Ascending aorta (tissue), 2 donors: ENCODE measurements at regions of chr5 and their contacts with region 1.

Region 1: GRCh38 chr5:147628058-147628895 is 118.4 kb upstream of the DPYSL3 start:
- DNase-seq: peak in 1 of 2 donors; percentile 71
- H3K4me3 ChIP-seq: no peak overlapping the region
- H3K27ac ChIP-seq: no peak overlapping the region
- H3K4me1 ChIP-seq: no peaks in the 10 kb centered on the region
- H3K27me3 ChIP-seq: no peaks in the 10 kb centered on the region
- CTCF ChIP-seq: peak; percentile 53 to 74 (median 56)

Region 2: DNA sequence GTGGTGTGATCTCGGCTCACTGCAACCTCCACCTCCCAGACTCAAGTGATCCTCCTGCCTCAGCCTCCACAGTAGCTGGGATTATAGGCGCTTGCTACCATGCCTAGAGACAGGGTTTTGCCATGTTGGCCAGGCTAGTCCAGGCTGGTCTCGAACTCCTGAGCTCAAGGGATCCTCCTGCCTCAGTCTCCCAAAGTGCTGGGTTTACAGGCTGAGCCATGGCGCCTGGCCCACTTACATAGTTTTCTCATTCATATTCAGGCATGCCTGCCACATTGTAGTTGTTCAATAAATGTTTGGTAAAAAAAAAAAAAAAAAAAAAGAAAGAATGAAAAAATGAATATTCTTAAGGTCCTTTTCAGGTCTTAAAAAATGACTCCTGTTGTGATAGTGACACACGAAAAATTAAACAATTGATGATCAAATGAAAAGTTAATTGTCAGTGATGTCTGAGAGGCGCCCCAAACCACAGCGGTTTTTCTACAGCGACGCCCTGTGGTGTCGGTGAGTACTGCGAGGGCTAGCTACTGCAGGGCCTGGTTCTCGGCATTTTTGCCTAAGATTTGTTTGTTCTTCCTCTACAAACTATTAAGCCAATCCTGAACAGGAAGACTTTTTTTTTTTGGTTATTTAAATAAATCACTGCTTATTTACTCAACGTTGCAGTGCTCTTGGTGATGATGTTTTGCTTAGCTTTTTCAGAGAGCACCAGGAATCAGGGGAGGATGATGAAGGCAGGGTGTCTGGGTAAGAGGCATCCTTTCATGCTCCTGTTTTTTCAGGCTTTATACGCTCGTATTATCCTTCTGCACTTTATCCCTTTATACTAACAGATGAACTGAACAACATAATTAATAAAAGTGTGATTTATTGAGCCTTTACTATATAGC is 51.4 kb before region 1 on chr5:
- intact Hi-C with region 1: no loop called
- DNase-seq: no peak
- H3K4me3 ChIP-seq: no peak overlapping the region
- H3K27ac ChIP-seq: no peak overlapping the region
- H3K4me1 ChIP-seq: peaks cover 0 to 4% of the 10 kb centered on the region in 2 donors
- H3K27me3 ChIP-seq: no peaks in the 10 kb centered on the region
- CTCF ChIP-seq: peak; percentile 78 to 88 (median 80)

Region 3: DNA sequence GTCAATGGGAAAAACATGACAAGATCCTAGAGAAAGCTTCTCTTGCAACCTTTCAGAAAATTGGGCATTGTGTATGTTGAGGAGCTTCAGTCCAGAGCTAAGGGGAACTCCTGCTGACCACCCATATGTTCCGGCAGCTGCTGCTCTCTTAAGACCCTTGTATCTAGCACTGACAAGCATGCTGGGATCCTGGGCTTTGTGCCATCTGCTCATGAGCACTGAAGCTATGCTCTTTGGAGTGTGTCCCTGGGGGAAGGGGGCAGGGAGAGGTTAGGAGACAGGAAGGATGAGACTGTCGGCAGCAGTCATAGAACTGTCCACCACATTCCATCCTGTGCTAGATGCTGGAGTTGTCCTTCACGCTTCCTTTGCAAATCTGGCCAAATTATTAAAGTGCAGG is 45.0 kb after region 1 on chr5:
- intact Hi-C with region 1: no loop called
- DNase-seq: no peak
- H3K4me3 ChIP-seq: no peak overlapping the region
- H3K27ac ChIP-seq: no peak overlapping the region
- H3K4me1 ChIP-seq: no peaks in the 10 kb centered on the region
- H3K27me3 ChIP-seq: no peaks in the 10 kb centered on the region
- CTCF ChIP-seq: no peak

Region 4: DNA sequence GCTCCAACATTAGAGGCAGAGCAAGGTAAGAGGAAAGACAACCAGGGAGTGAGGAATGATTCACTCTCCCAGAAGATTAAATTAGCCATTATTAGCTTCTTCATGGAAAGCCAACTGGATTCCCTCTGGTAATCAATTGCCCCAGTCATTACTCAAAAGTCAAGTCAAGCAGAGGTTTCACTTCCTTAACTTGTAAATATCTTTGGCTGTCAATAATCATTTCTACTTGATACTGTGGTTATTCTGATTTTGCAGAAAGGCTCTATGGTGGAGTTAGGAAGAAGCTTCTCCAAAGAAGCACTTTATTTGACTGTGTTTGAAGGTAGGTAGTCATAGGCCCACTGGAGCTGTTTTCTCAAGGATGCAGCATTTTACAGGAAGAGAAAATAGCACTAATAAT is 76.3 kb after region 1 on chr5:
- intact Hi-C with region 1: no loop called
- DNase-seq: no peak
- H3K4me3 ChIP-seq: no peak overlapping the region
- H3K27ac ChIP-seq: no peak overlapping the region
- H3K4me1 ChIP-seq: no peaks in the 10 kb centered on the region
- H3K27me3 ChIP-seq: no peaks in the 10 kb centered on the region
- CTCF ChIP-seq: no peak

Region 5: GRCh38 chr5:147822686-147823491 is 194.6 kb after region 1 on chr5:
- intact Hi-C with region 1: loop called (anchors 1 kb)
- DNase-seq: no peak
- H3K4me3 ChIP-seq: no peak overlapping the region
- H3K27ac ChIP-seq: no peak overlapping the region
- H3K4me1 ChIP-seq: no peaks in the 10 kb centered on the region
- H3K27me3 ChIP-seq: no peaks in the 10 kb centered on the region
- CTCF ChIP-seq: peak; percentile 53 to 67 (median 66)

Region 6: DNA sequence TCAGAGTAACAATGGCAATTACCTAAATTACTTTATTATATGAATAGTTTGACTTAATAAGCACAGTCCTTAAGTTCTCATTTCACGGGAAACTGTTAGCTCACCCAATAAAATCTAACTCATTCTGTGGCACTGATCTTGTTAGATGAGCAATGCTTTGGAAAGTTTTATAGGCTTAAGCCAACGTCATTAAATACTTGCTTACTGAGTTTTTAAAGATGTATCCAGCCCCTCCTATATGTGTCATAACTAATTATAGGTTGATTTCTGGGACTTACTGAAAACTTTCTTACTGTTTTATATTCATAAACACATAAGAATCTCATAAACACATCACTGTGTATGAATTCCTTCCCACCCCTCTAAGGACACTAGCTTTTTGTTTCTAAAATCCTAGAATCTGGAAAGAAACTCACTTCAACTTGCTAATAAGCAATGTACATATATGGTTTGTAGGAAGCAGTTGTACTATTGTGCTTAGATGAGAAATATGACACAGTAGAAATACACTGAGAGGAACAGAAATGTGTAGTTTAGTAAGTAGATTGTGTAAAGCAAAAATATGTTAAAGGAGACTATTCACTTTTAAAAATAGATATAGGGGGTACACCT is 596.0 kb after region 1 on chr5:
- intact Hi-C with region 1: no loop called
- DNase-seq: no peak
- H3K4me3 ChIP-seq: no peak overlapping the region
- H3K27ac ChIP-seq: no peak overlapping the region
- H3K4me1 ChIP-seq: no peaks in the 10 kb centered on the region
- H3K27me3 ChIP-seq: no peaks in the 10 kb centered on the region
- CTCF ChIP-seq: no peak